ENCODE measurements at regions of chr5 and their contacts with region 1.

Region 1: DNA sequence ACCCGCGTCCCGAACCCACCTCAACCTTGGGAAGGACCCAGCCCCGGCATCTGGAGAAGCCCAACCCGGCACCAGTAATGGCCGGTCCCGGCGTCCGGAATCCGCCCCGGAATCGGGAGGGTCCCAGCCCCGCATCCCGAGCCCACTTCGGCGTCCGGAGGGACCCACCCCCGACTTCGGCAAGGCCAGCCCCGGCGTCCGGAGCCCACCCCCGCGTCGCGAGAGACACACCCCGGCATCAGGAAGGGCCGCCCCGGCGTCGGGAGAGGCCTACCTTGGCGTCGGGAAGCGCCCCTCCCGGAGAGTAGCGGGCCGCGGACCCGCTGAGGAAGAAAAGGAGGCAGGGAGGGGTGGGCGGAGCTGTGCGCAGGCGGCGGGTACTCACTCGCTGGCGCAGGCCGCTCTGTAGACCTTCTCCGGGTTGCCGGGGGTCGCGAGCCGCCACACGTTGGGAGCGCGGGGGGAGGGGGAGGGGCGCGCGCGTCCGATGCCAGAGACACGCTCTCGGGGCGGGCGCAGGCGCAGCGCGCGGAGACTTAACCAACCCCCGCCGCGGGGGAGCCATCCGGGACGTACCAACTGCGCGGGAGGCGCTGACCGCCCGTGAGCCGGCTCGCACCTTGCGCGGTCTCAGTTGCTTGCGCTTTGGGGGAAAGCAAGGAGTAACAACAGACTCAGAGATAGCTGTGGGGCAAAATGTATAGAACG is at the start of gene UIMC1:
- DNase-seq: peak; percentile 83 to 99
- H3K4me3 ChIP-seq: peak within 1 kb of the TSS; percentile 72 to 85 (median 80)
- H3K27ac ChIP-seq: peak within 1 kb of the TSS; percentile 89
- H3K4me1 ChIP-seq: peaks cover 0 to 3% (median 3%) of the 10 kb centered on the region in 4 experiments; a peak in 4 of 7 replicates
- H3K27me3 ChIP-seq: no peaks in the 10 kb centered on the region
- CTCF ChIP-seq: no peak
- EP300 ChIP-seq: peak in 1 of 2 experiments; percentile 100; a peak in 2 of 3 replicates
- POLR2A ChIP-seq: peak; percentile 49 to 52; a peak in 2 of 3 replicates
- RAD21 ChIP-seq: no peak; a peak in 1 of 4 replicates
- total RNA-seq, gene UIMC1: 43.0 and 43.7 TPM in 2 replicates

Region 2: GRCh38 chr5:176934309-176934930 is 72.0 kb before region 1 on chr5:
- CTCF ChIA-PET with region 1: no interaction called
- POLR2A ChIA-PET with region 1: no interaction called
- DNase-seq: no peak
- H3K4me3 ChIP-seq: no peak overlapping the region
- H3K27ac ChIP-seq: no peak overlapping the region
- H3K4me1 ChIP-seq: no peaks in the 10 kb centered on the region; a peak in 1 of 7 replicates
- H3K27me3 ChIP-seq: no peaks in the 10 kb centered on the region
- CTCF ChIP-seq: no peak
- EP300 ChIP-seq: no peak
- POLR2A ChIP-seq: no peak
- RAD21 ChIP-seq: no peak

Region 3: GRCh38 chr5:176995896-176996754 is 10.3 kb before region 1 on chr5:
- CTCF ChIA-PET with region 1: interaction called, 4 read pairs
- POLR2A ChIA-PET with region 1: interaction called, 11 read pairs
- DNase-seq: no peak
- H3K4me3 ChIP-seq: no peak overlapping the region
- H3K27ac ChIP-seq: no peak overlapping the region
- H3K4me1 ChIP-seq: no peaks in the 10 kb centered on the region
- H3K27me3 ChIP-seq: no peaks in the 10 kb centered on the region
- CTCF ChIP-seq: no peak
- EP300 ChIP-seq: no peak
- POLR2A ChIP-seq: no peak
- RAD21 ChIP-seq: no peak

Region 4: DNA sequence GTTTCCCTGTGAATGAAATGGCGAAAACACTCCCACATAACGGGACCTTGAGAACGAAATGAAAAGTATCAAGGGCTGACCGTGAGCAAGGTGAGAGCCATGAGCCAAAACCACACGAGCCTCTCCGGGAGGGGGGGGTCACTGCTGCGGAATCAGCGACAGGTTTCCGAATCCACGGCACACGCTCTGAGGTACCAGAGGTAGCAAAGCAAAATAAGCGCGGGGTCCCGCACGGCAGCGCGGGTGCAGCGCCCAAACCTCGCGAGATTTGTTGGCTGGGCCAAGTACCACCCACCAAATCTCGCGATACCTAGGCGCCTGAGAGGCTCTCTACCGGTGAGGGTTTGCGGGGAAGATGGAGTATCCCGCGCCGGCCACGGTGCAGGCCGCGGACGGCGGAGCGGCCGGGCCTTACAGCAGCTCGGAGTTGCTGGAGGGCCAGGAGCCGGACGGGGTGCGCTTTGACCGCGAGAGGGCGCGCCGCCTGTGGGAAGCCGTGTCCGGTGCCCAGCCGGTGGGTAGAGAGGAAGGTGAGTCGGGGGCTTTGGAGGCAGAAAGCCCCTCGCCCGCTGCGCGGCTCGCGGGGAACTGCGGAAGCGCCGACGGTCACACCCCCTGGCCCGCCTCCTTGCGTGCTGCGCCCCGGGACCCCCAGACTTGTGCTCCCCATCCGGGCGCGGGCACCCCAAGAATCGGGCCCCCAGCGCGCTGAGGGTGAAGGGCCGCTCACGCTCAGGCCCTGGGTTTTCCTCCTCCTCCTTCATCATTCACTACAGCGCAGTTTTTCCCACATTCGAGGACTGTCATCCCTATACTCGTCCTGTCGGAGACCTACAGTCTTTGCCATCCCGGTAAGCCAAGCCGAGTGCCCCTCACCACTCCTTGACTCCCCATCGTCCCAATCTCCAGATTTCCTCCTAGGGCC is 16.2 kb after region 1 on chr5 and contains the start of gene ZNF346:
- CTCF ChIA-PET with region 1: interaction called, 17 read pairs
- POLR2A ChIA-PET with region 1: interaction called, 26 read pairs
- DNase-seq: peak; percentile 70 to 93
- H3K4me3 ChIP-seq: peak within 1 kb of the TSS; percentile 49 to 75 (median 74)
- H3K27ac ChIP-seq: peak within 1 kb of the TSS; percentile 13; the same call in 1 of the 2 replicates
- H3K4me1 ChIP-seq: peaks cover 0 to 4% (median 0%) of the 10 kb centered on the region in 4 experiments; a peak in 3 of 7 replicates
- H3K27me3 ChIP-seq: no peaks in the 10 kb centered on the region
- CTCF ChIP-seq: peak; percentile 55 to 66 (median 64)
- EP300 ChIP-seq: no peak
- POLR2A ChIP-seq: peak in 1 of 2 experiments; percentile 87; a peak in 2 of 3 replicates
- RAD21 ChIP-seq: peak; percentile 1 to 32; a peak in 1 of 4 replicates
- total RNA-seq, gene ZNF346: 19.9 and 20.2 TPM in 2 replicates

Region 5: DNA sequence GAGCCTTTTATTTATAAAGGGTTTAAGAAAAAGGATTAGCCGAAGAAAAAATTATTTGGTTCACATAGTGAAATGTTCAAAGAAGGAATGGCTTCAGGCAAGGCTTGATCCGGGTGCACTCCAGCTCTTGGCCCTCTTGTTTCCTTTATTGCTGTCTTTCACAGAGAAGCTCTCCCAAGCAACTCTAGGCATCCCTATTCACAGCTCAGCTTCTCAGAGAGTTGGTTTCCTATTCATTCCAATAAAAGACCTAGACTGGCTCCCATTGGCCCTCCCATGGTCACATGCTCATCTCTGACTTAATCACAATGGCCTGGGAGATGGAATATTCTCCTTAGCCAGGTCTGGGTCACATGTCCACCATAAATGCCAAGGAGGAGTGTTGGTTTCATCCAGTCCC is 70.9 kb after region 1 on chr5:
- CTCF ChIA-PET with region 1: no interaction called
- POLR2A ChIA-PET with region 1: no interaction called
- DNase-seq: no peak
- H3K4me3 ChIP-seq: no peak overlapping the region
- H3K27ac ChIP-seq: no peak overlapping the region
- H3K4me1 ChIP-seq: no peaks in the 10 kb centered on the region; a peak in 1 of 7 replicates
- H3K27me3 ChIP-seq: no peaks in the 10 kb centered on the region; a peak in 1 of 7 replicates
- CTCF ChIP-seq: no peak
- EP300 ChIP-seq: no peak
- POLR2A ChIP-seq: no peak
- RAD21 ChIP-seq: no peak

Measured in H1 (cell line).